Mammary epithelial cell (primary cell): ENCODE measurements at regions of chr10 and their contacts with region 1.

Region 1: GRCh38 chr10:29585488-29585980 is 49.2 kb downstream of the SVIL start:
- DNase-seq: no peak
- H3K4me3 ChIP-seq: no peak overlapping the region
- H3K27ac ChIP-seq: no peak overlapping the region
- H3K4me1 ChIP-seq: peaks cover 35% of the 10 kb centered on the region
- H3K27me3 ChIP-seq: no peaks in the 10 kb centered on the region
- CTCF ChIP-seq: no peak

Region 2: DNA sequence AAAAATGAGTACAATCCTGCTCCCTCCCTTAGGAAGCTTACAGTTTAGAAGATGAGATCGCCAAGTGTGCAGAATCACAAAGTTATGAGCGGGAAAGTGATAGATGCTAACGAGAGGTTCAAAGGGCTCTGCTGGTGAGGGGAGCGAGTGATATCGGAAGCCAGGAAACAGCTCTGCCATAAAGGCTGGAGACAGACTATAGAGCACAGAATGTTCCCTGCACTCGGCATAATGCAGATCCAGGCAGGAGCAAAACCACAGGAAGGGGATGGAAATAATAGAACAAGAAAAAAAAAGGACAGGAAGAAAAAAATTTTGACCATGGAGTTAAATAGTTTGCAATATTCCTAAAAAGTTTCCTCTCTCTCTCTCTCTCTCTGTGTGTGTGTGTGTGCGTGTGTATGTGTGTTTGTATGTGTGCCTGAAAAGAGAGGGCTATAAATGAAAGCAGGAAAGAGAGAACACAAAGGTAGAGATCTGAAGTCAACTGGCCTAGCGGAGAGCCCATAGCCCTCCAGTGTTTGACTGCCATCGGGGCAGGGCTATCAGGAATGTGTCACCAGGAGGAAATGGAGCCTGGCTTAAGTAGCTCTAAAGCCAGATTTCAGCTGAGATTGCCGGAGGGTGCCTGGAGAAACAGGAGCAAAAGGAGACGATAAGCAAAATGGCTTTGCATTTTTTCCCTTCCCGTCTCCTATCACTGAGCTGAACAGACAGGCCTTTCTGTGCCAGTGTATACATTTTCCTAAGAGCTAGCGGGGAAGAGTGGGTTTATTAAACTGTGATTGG is 472.5 kb before region 1 on chr10:
- CTCF ChIA-PET with region 1: no interaction called
- dilution Hi-C with region 1: no loop called
- in situ Hi-C with region 1: no loop called
- intact Hi-C with region 1: no loop called
- DNase-seq: no peak
- H3K4me3 ChIP-seq: no peak overlapping the region
- H3K27ac ChIP-seq: no peak overlapping the region
- H3K4me1 ChIP-seq: no peaks in the 10 kb centered on the region
- H3K27me3 ChIP-seq: no peaks in the 10 kb centered on the region
- CTCF ChIP-seq: no peak

Region 3: DNA sequence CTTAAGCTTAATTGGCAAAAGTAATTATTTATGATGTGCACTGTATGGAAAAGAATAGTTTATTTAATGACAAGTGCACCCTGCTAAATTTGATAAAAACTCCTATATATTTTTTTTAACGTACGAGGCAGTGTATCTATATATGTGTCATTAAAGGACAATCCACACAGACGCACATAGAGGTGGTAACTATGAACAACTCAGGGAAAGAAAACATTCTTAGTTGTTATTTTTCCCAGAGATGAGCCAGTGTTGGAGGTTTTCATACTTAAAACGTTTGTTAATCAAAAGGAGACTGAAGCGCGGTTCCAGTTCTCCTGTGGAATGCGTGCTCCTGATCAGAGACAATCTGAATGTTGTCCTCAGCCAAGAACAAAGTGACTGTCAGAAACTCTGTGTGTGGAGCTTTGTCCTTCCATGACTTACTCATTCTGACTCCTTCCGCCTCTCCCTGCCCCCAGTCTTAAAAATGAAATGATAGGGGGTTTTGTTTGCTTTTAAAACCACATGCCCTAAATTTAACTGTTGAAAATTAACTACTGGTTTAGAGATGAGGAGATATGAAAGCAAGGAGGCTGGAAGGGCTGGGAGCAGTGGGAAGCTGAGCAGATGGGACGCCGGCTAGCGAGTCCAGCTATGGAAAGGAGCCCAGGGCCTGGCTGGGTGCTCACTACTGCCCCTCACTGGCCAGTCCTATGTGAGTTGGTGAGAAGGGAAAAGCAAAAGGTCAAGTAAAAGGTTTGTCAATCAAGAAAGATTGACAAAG is 50.3 kb before region 1 on chr10:
- CTCF ChIA-PET with region 1: interaction called, 21 read pairs
- dilution Hi-C with region 1: no loop called
- in situ Hi-C with region 1: no loop called
- intact Hi-C with region 1: loop called (anchors 1 kb)
- DNase-seq: peak; percentile 83
- H3K4me3 ChIP-seq: peak overlapping the region in 2 of 3 experiments; percentile 11 to 19
- H3K27ac ChIP-seq: peak overlapping the region; percentile 70
- H3K4me1 ChIP-seq: peaks cover 25% of the 10 kb centered on the region
- H3K27me3 ChIP-seq: no peaks in the 10 kb centered on the region
- CTCF ChIP-seq: peak; percentile 81 to 89

Region 4: DNA sequence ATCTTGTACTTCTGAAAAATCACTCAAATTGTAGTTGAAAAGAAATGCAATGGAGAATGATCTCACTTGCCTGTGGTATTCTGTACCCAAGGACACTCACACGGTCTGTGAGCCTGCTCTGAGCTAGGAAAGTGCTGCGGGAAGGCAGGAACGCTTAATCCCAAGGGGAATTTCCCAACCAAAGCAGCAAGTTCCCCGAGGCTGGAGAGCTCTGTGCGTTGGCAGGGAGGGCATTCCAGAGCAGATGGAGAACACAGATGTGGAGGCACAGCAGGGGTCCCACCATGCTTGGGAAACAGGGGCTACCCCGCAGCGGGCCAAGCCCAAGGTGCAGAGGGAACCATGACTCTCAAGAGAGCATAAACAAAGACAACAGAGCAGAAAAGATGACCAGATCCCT is 35.6 kb after region 1 on chr10:
- CTCF ChIA-PET with region 1: interaction called, 31 read pairs
- dilution Hi-C with region 1: no loop called
- in situ Hi-C with region 1: no loop called
- intact Hi-C with region 1: no loop called
- DNase-seq: peak; percentile 88
- H3K4me3 ChIP-seq: no peak overlapping the region
- H3K27ac ChIP-seq: peak overlapping the region; percentile 43
- H3K4me1 ChIP-seq: peaks cover 36% of the 10 kb centered on the region
- H3K27me3 ChIP-seq: no peaks in the 10 kb centered on the region
- CTCF ChIP-seq: no peak

Region 5: GRCh38 chr10:29681676-29682448 is 96.3 kb after region 1 on chr10:
- CTCF ChIA-PET with region 1: interaction called, 31 read pairs
- dilution Hi-C with region 1: no loop called
- in situ Hi-C with region 1: no loop called
- intact Hi-C with region 1: no loop called
- DNase-seq: no peak
- H3K4me3 ChIP-seq: no peak overlapping the region
- H3K27ac ChIP-seq: no peak overlapping the region
- H3K4me1 ChIP-seq: peaks cover 12% of the 10 kb centered on the region
- H3K27me3 ChIP-seq: no peaks in the 10 kb centered on the region
- CTCF ChIP-seq: no peak